ENCODE measurements at regions of chr14 and their contacts with region 1.

Region 1: DNA sequence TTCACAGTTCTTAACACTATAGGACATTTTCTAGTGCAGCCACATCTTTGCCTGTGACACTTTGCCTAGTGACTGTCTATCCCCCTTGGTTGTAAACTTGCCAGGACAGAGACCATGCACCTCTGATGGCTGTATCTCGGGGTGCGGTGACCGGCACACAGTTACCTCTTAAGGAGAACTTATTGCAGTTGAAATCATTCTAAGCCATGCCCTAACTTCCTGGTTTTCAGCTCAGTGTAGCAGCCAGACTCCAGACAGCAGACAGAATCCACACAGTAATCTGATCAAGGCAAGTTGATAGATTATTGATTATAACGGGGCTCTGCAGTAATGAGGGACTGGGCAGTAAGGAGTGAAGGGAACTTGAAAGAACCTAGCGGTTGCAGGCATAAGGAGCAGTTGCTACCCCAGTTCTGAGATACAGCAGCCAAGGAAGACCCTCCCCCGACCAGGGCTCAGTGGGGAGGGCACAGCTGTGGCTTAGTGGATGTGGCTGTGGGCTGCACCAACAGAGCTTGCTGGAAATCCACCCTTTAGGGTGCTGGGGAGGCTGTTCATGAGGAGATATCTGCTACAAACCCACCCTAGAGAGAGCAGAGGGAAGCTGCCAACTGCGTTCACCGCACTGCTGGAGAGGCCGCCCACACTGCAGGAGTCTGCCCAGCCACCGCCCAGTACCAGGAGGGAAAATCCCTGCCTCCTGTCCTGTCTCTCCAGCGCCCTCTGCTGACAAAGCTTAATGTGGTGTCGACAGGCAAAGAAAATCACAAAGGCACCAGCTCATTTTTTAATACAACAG is 58.2 kb upstream of the BEGAIN start:
- DNase-seq: peak; percentile 90
- H3K4me3 Mint-ChIP-seq: no peak overlapping the region
- H3K27ac Mint-ChIP-seq: no peak overlapping the region
- H3K4me1 Mint-ChIP-seq: peaks cover 5% of the 10 kb centered on the region
- H3K27me3 Mint-ChIP-seq: no peaks in the 10 kb centered on the region
- CTCF ChIP-seq: peak; percentile 82

Region 2: DNA sequence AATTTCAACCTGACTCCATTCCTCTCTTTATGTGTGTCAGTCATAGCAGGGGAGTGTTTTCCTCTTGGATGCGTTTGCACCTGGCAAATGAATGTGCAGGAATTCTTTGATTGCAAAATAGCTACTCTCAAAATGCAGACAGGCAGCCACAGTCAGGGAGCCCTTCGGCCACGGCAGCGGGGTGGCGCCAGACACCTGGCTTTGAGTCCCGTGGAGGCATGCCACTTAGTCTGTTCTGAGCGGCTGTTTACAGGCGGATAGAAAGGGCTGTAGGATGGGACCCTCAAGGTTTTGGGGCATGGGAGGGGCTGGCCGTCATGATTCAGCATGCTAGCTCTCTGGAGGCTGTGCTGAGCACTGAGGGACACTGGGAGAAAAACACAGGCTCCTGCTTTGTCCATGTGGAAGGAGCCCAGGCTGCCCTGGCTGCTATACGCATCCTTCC is 205.2 kb before region 1 on chr14:
- CTCF ChIA-PET with region 1: interaction called, 81 read pairs
- POLR2A ChIA-PET with region 1: interaction called, 15 read pairs
- intact Hi-C with region 1: loop called (anchors 1 kb)
- DNase-seq: peak; percentile 89
- H3K4me3 Mint-ChIP-seq: peak overlapping the region; percentile 48
- H3K27ac Mint-ChIP-seq: peak overlapping the region; percentile 87
- H3K4me1 Mint-ChIP-seq: peaks cover 23% of the 10 kb centered on the region
- H3K27me3 Mint-ChIP-seq: no peaks in the 10 kb centered on the region
- CTCF ChIP-seq: peak; percentile 85

Region 3: GRCh38 chr14:100524933-100525243 is 120.5 kb before region 1 on chr14:
- CTCF ChIA-PET with region 1: no interaction called
- POLR2A ChIA-PET with region 1: no interaction called
- intact Hi-C with region 1: loop called (anchors 10 kb)
- DNase-seq: no peak
- H3K4me3 Mint-ChIP-seq: no peak overlapping the region
- H3K27ac Mint-ChIP-seq: no peak overlapping the region
- H3K4me1 Mint-ChIP-seq: no peaks in the 10 kb centered on the region
- H3K27me3 Mint-ChIP-seq: no peaks in the 10 kb centered on the region
- CTCF ChIP-seq: peak; percentile 14

Region 4: DNA sequence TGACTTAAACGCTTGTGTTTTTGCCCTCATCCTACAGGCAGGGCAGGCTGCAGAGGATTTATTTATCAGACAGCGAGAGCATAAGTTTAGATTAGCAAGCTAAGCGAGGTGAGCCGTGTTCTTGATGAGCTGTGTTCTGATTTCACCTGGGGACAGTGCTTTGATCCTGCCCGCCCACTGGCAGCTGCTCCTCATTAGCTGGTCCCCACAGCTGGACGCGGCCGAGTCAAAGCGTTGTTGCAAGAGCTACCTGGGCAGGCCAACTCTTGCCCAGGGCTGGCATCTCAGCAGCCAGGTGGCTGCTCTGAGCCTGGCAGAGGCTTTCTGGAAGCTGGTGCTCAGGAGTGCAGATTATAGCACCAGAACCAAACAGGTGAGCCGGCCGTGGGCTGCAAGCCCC is 11.4 kb before region 1 on chr14:
- CTCF ChIA-PET with region 1: interaction called, 23 read pairs
- POLR2A ChIA-PET with region 1: interaction called, 3 read pairs
- intact Hi-C with region 1: no loop called
- DNase-seq: no peak
- H3K4me3 Mint-ChIP-seq: no peak overlapping the region
- H3K27ac Mint-ChIP-seq: no peak overlapping the region
- H3K4me1 Mint-ChIP-seq: peaks cover under 1% of the 10 kb centered on the region
- H3K27me3 Mint-ChIP-seq: peaks cover 18% of the 10 kb centered on the region
- CTCF ChIP-seq: no peak